ENCODE measurements at regions of chr12 and their contacts with region 1.

Region 1: GRCh38 chr12:49763006-49763591 is 21.7 kb downstream of the TMBIM6 start:
- DNase-seq: peak; percentile 61 to 77 (median 68)
- ATAC-seq: peak; percentile 92
- H3K4me3 ChIP-seq: no peak overlapping the region
- H3K4me3 Mint-ChIP-seq: peak overlapping the region; percentile 29 to 78 (median 54)
- H3K27ac ChIP-seq: peak overlapping the region; percentile 57
- H3K27ac Mint-ChIP-seq: peak overlapping the region; percentile 76 to 93 (median 84)
- H3K4me1 ChIP-seq: peaks cover 25 to 43% of the 10 kb centered on the region in 2 donors
- H3K4me1 Mint-ChIP-seq: peaks cover 42 to 65% (median 60%) of the 10 kb centered on the region in 7 donors
- H3K27me3 ChIP-seq: no peaks in the 10 kb centered on the region
- H3K27me3 Mint-ChIP-seq: no peaks in the 10 kb centered on the region

Region 2: GRCh38 chr12:49636979-49637755 is 125.9 kb before region 1 on chr12:
- CTCF ChIA-PET with region 1: interaction called, 5 read pairs
- POLR2A ChIA-PET with region 1: no interaction called
- intact Hi-C with region 1: loop called in 1 of 2 experiments (anchors 5 kb)
- DNase-seq: peak in 8 of 9 donors; percentile 45 to 71 (median 61)
- ATAC-seq: peak; percentile 95
- H3K4me3 ChIP-seq: no peak overlapping the region
- H3K4me3 Mint-ChIP-seq: peak overlapping the region in 1 of 10 donors; percentile 20
- H3K27ac ChIP-seq: peak overlapping the region; percentile 38
- H3K27ac Mint-ChIP-seq: peak overlapping the region; percentile 13 to 90 (median 68)
- H3K4me1 ChIP-seq: peaks cover 6 to 11% of the 10 kb centered on the region in 2 donors
- H3K4me1 Mint-ChIP-seq: peaks cover 10 to 36% (median 26%) of the 10 kb centered on the region in 7 donors
- H3K27me3 ChIP-seq: no peaks in the 10 kb centered on the region
- H3K27me3 Mint-ChIP-seq: no peaks in the 10 kb centered on the region

Region 3: DNA sequence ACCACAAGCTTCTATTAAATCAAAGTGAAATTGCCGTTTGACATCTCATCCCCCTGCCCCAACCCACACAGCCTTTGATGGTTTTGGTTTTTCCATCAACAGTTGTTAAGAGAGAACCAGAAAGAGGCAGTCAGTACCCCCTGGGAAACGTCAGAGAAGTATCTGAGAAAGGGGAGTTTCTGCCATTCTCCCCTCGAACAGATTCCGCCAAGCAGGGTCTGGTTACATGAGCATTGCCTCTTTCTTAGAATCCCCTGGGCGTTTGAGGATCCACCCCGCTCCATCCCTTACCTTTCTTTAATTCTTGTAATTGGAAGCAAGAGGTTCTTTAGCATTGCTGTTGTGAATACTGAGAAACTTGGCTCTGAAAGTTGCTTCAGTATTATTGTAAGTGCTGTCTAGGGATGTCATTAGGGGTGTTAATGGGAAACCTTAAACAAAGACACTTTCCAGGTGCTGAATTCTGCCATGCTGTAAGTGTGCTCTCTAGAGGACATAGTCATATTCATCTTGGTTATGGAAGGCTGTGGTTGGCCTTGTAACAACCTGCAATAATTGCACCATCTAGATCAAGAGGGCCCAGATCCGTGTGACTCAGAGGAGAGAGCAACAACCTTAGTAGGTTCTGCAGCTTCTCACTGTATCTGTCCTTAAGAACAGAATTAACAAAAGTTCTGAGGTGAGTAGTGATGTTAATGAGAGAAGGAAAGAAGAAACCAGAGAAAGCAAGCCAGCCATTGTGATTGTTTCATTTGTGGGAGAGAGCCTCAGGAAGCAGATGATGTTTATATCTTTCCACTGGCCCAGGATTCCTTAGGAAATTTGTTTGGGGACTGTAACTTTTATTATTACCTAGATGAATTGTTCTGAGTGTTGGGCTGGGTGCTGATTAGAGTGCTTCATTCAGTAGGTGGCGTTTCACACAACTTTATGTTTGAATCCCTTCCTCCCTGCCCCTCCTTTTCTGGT is 12.8 kb before region 1 on chr12:
- CTCF ChIA-PET with region 1: interaction called, 5 read pairs
- POLR2A ChIA-PET with region 1: interaction called, 4 read pairs
- intact Hi-C with region 1: loop called in 1 of 2 experiments (anchors 1 kb)
- DNase-seq: peak in 5 of 9 donors; percentile 10 to 59 (median 36)
- ATAC-seq: peak; percentile 76
- H3K4me3 ChIP-seq: peak overlapping the region; percentile 2
- H3K4me3 Mint-ChIP-seq: peak overlapping the region; percentile 39 to 95 (median 66)
- H3K27ac ChIP-seq: peak overlapping the region; percentile 46
- H3K27ac Mint-ChIP-seq: peak overlapping the region; percentile 26 to 89 (median 76)
- H3K4me1 ChIP-seq: peaks cover 50 to 56% of the 10 kb centered on the region in 2 donors
- H3K4me1 Mint-ChIP-seq: peaks cover 43 to 89% (median 77%) of the 10 kb centered on the region in 7 donors
- H3K27me3 ChIP-seq: no peaks in the 10 kb centered on the region
- H3K27me3 Mint-ChIP-seq: no peaks in the 10 kb centered on the region

Region 4: GRCh38 chr12:50603817-50604639 is 840.9 kb after region 1 on chr12:
- CTCF ChIA-PET with region 1: no interaction called
- POLR2A ChIA-PET with region 1: no interaction called
- intact Hi-C with region 1: no loop called
- DNase-seq: no peak
- ATAC-seq: no peak
- H3K4me3 ChIP-seq: no peak overlapping the region
- H3K4me3 Mint-ChIP-seq: no peak overlapping the region
- H3K27ac ChIP-seq: no peak overlapping the region
- H3K27ac Mint-ChIP-seq: peak overlapping the region in 1 of 9 donors; percentile 36
- H3K4me1 ChIP-seq: no peaks in the 10 kb centered on the region
- H3K4me1 Mint-ChIP-seq: peaks cover 18 to 62% (median 48%) of the 10 kb centered on the region in 7 donors
- H3K27me3 ChIP-seq: no peaks in the 10 kb centered on the region
- H3K27me3 Mint-ChIP-seq: no peaks in the 10 kb centered on the region